ENCODE measurements at regions of chr2 and their contacts with region 1.

Region 1: GRCh38 chr2:73736855-73737779 is at the start of gene TPRKB:
- DNase-seq: peak; percentile 97
- total RNA-seq, gene TPRKB: 14.7 TPM

Region 2: GRCh38 chr2:73588177-73588576 is 148.9 kb before region 1 on chr2:
- intact Hi-C with region 1: no loop called
- DNase-seq: no peak

Region 3: DNA sequence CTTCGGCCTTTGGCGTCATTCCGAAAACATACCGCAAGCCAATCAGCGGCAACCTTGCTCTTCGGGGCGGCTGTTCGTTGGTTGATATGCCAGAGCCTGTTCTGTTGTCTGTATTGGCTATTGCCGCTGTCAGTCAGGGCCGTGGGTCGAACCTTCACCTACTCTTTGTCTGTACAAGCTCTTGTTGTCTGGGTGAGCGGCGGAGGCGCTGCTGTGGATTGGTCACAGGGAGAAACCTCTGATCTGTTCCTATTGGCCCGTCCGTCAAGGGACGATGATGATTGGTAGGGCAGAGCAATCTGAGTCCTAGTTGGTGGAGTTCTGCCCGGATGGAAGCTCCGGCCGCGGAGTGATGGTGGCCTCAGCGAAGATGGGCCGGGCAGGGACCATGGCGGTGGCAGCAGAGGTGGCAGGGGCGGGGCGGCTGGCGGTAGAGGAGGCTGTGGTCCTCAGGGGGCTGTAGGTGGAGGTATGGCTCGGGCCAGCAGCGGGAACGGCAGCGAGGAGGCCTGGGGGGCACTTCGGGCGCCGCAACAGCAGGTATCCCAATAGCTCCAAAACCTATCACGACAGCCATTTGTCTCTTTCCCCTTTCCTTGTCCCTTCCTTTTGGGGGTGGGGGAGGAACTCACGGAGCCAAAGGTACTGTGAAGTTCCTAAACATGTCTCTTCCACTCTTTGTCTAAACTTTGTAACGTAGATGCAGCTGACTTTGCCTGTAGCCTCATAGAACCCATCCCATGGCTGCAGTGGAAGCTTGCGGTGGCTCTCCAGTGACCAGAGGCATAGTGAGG is 721.2 kb after region 1 on chr2 and contains the start of gene WBP1:
- intact Hi-C with region 1: loop called (anchors 5 kb)
- DNase-seq: peak; percentile 100
- total RNA-seq, gene WBP1: 47.7 TPM